Heart left ventricle (tissue), 16 donors: ENCODE measurements at regions of chr13 and their contacts with region 1.

Region 1: GRCh38 chr13:43074824-43075510 is 51.6 kb downstream of the DNAJC15 start:
- DNase-seq: no peak
- ATAC-seq: no peak
- H3K4me3 ChIP-seq: no peak overlapping the region
- H3K27ac ChIP-seq: no peak overlapping the region
- H3K4me1 ChIP-seq: peaks cover 0 to 43% (median 18%) of the 10 kb centered on the region in 12 donors
- H3K27me3 ChIP-seq: no peaks in the 10 kb centered on the region
- CTCF ChIP-seq: no peak
- POLR2A ChIP-seq: no peak

Region 2: DNA sequence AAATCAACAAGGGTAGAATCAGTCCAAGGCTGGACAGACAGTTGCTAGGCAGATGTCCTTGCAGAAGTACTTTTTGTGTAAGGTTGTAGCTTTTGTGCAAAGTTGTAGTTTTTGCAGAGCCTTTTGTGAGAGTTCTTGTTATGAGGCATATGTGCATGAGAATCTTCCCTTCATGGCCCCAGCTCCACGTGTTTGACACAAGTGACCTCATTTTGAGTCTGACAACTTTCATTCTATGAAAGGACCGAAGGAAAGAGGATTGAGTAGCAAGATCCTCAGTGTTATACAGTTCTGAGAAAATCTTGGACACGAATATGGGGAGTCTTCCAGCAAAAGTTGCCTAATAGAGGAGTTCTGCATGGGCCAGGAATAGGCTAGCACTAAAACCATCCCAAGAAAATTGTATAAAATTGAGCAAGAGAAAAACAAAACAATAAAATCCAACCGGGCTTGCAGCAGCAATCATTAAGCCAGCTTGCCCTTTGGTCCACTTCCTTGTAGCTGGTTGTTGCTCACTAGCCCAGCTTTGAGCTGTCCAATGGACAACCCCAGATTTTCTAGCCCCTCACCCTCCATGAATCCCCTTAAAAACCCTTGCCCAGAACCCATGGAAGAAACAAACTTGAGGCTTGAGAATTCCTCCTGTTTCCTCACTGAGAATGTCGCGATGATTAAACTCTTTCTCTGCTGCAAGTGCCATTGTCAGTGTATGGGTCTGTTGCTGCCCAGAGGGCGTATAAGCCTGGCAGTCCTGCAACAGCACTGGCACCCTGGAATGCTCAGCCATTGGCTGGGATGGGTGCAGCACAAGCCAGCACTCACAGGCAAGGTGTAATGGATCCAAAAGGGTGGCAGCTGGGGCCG is 89.4 kb before region 1 on chr13:
- intact Hi-C with region 1: loop called in 1 of 10 experiments (anchors 10 kb)
- DNase-seq: peak in 1 of 5 donors; percentile 37
- ATAC-seq: peak; percentile 63 to 82 (median 68)
- H3K4me3 ChIP-seq: no peak overlapping the region
- H3K27ac ChIP-seq: peak overlapping the region in 3 of 12 donors; percentile 7 to 33 (median 10)
- H3K4me1 ChIP-seq: peaks cover 0 to 54% (median 11%) of the 10 kb centered on the region in 12 donors
- H3K27me3 ChIP-seq: no peaks in the 10 kb centered on the region
- CTCF ChIP-seq: no peak
- POLR2A ChIP-seq: no peak

Region 3: DNA sequence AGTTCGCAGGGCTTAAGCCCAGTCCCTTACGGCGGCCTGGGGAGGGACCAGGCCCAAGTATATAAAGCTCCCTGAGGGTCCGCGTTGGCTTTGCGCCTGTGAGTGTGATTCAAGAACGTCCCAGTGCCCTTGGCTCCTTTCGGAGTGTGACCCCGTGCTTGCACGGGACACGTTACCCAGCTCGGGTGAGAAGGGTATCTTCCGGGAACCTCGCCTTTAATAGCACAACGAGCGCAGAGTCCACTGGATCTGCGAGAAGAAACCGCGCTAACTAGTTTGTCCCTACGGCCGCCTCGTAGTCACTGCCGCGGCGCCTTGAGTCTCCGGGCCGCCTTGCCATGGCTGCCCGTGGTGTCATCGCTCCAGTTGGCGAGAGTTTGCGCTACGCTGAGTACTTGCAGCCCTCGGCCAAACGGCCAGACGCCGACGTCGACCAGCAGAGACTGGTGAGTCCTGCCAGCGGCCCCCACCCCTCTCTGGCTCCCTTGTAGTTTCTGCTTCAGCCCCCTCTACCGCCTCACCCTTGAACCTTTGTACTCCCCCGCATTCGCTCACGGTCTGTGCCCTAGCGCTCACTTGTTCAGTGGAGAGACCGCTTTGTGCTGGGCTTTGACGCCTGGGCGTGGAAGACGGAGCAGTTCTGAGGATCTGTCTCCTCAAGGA is 51.5 kb before region 1 on chr13 and contains the start of gene DNAJC15:
- intact Hi-C with region 1: loop called in 1 of 10 experiments (anchors 5 kb)
- DNase-seq: peak; percentile 89 to 93 (median 90)
- ATAC-seq: peak; percentile 81 to 97 (median 95)
- H3K4me3 ChIP-seq: peak within 1 kb of the TSS; percentile 40 to 88 (median 76)
- H3K27ac ChIP-seq: peak within 1 kb of the TSS; percentile 11 to 97 (median 91)
- H3K4me1 ChIP-seq: peaks cover 0 to 43% (median 20%) of the 10 kb centered on the region in 12 donors
- H3K27me3 ChIP-seq: no peaks in the 10 kb centered on the region
- CTCF ChIP-seq: peak in 5 of 12 donors; percentile 4 to 40 (median 28)
- POLR2A ChIP-seq: peak in 1 of 2 donors; percentile 35
- total RNA-seq, gene DNAJC15: 12.8 to 28.5 (median 24.1) TPM

Region 4: GRCh38 chr13:43986421-43986981 is 911.5 kb after region 1 on chr13:
- intact Hi-C with region 1: no loop called
- DNase-seq: peak in 1 of 5 donors; percentile 37
- ATAC-seq: peak; percentile 89 to 95 (median 92)
- H3K4me3 ChIP-seq: no peak overlapping the region
- H3K27ac ChIP-seq: peak overlapping the region; percentile 51 to 86 (median 77)
- H3K4me1 ChIP-seq: peaks cover 0 to 45% (median 15%) of the 10 kb centered on the region in 12 donors
- H3K27me3 ChIP-seq: peaks cover 0 to 2% (median 0%) of the 10 kb centered on the region in 9 donors
- CTCF ChIP-seq: peak in 3 of 12 donors; percentile 5 to 31 (median 19)
- POLR2A ChIP-seq: no peak